Activated CD4-positive, alpha-beta T cell treated with anti-CD3 and anti-CD28 coated beads, Interleukin-2, amount 10 ng/mL, durations not matched to agents 7 days and 5 days (primary cell): ENCODE measurements at regions of chr16 and their contacts with region 1.

Region 1: DNA sequence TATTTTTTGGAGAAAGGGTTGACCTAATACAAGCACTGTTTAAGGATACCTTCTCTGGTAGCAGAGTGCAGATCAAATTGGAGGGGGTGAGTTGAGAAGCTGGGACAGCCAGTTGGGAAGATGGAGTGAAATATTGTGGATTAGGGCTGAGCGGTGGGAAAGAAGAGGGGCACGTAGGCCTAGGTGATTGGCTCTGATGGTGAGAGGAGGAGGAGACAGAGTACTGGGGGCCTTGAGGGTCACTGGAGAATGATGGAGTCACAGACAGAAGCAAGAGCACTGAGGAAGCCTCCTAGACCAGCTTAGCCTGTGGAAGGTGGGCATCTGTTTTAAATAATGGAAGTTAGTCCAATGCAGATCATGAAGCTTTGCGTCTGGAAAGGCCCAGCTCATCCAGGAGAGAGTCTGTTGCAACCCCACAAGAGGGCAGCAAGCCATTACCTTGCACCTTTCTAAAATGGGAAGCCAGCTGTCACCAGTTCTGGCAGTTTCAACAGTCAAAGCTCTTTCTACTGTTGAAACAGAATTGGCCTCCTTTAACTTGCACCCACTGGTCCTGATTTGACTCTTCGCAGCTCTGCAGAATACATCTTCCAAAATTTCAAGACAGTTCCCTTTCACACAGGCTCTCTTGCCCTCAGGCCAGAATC is 11.8 kb downstream of the SLC9A5 start:
- DNase-seq: peak; percentile 53
- H3K4me3 Mint-ChIP-seq: no peak overlapping the region
- H3K27ac Mint-ChIP-seq: no peak overlapping the region
- H3K4me1 Mint-ChIP-seq: no peaks in the 10 kb centered on the region
- H3K27me3 Mint-ChIP-seq: peaks cover 8% of the 10 kb centered on the region

Region 2: GRCh38 chr16:66947302-66948065 is 313.1 kb before region 1 on chr16:
- CTCF ChIA-PET with region 1: no interaction called
- POLR2A ChIA-PET with region 1: no interaction called
- DNase-seq: peak; percentile 90
- H3K4me3 Mint-ChIP-seq: peak overlapping the region; percentile 77
- H3K27ac Mint-ChIP-seq: no peak overlapping the region
- H3K4me1 Mint-ChIP-seq: peaks cover 23% of the 10 kb centered on the region
- H3K27me3 Mint-ChIP-seq: peaks cover 38% of the 10 kb centered on the region

Region 3: DNA sequence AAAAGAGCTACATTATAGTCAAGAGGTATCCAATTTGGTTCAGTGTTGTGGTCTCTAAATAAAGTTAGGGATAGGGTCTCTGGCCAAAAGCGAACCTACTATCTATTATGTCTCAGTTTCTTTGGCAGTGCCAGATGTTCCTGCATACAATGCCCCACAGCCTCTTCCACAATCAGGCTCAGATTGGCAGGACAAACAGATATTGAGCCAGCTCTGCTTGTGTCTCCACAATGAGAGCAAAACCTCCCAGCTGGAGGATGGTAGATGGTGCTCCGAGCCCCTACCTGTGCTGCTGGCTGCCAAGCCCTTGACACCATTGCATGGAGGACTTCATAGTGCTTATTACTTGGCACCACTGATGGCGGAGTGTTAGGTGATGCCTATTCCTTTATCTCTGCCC is 131.1 kb before region 1 on chr16:
- CTCF ChIA-PET with region 1: no interaction called
- POLR2A ChIA-PET with region 1: no interaction called
- DNase-seq: no peak
- H3K4me3 Mint-ChIP-seq: no peak overlapping the region
- H3K27ac Mint-ChIP-seq: no peak overlapping the region
- H3K4me1 Mint-ChIP-seq: no peaks in the 10 kb centered on the region
- H3K27me3 Mint-ChIP-seq: no peaks in the 10 kb centered on the region

Region 4: DNA sequence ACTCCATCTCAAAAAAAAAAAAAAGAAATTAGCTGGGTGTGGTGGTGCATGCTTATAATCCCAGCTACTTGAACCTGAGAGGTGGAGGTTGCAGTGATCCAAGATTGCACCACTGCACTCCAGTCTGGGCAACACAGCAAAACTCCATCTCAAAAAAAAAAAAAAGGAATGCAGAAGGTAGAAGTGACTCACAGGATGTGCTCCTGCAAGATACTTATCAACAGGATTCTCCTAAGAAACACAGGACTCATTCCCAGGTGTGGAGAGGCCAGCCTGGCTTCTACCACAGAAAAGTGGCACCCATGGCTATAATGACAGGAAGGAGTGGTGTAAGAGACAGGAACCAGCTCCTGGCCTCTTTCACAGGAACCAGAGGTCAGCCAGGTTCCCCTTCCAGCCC is 47.8 kb before region 1 on chr16:
- CTCF ChIA-PET with region 1: no interaction called
- POLR2A ChIA-PET with region 1: no interaction called
- DNase-seq: no peak
- H3K4me3 Mint-ChIP-seq: no peak overlapping the region
- H3K27ac Mint-ChIP-seq: no peak overlapping the region
- H3K4me1 Mint-ChIP-seq: peaks cover 10% of the 10 kb centered on the region
- H3K27me3 Mint-ChIP-seq: no peaks in the 10 kb centered on the region

Region 5: GRCh38 chr16:67279296-67280089 is 18.9 kb after region 1 on chr16 and contains the start of gene PLEKHG4:
- CTCF ChIA-PET with region 1: interaction called, 10 read pairs
- POLR2A ChIA-PET with region 1: no interaction called
- DNase-seq: peak; percentile 85
- H3K4me3 Mint-ChIP-seq: peak within 1 kb of the TSS; percentile 78
- H3K27ac Mint-ChIP-seq: peak within 1 kb of the TSS; percentile 89
- H3K4me1 Mint-ChIP-seq: peaks cover 17% of the 10 kb centered on the region
- H3K27me3 Mint-ChIP-seq: no peaks in the 10 kb centered on the region
- total RNA-seq, gene PLEKHG4: 15.7 TPM

Region 6: DNA sequence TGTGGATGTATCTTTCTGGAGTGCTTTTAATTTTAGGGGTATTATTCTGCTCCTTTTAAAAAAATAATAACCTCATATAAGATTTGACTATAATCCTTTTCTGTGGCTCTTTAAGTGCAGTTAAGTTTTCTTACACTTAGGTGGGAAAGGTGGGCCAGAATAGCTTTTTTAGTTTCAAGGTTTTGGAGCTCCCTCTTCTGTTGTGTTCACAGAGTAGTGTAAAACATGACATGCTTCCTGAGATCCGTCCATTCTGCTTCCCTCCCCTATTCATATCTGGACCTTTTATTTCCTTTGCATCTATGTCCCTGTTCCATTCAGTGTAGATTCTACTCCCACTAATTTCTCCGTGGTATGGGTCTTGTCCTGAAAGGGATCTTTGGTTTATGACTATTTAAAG is 78.9 kb after region 1 on chr16:
- CTCF ChIA-PET with region 1: no interaction called
- POLR2A ChIA-PET with region 1: no interaction called
- DNase-seq: no peak
- H3K4me3 Mint-ChIP-seq: no peak overlapping the region
- H3K27ac Mint-ChIP-seq: no peak overlapping the region
- H3K4me1 Mint-ChIP-seq: no peaks in the 10 kb centered on the region
- H3K27me3 Mint-ChIP-seq: peaks cover 8% of the 10 kb centered on the region